Activated CD4-positive, alpha-beta T cell treated with anti-CD3 and anti-CD28 coated beads, Interleukin-2, amount 10 ng/mL, durations not matched to agents 24 days and 14 days (primary cell): ENCODE measurements at regions of chr3 and their contacts with region 1.

Region 1: GRCh38 chr3:16247276-16248061 is 17.3 kb downstream of the DPH3 start:
- DNase-seq: peak; percentile 94
- H3K4me3 Mint-ChIP-seq: no peak overlapping the region
- H3K27ac Mint-ChIP-seq: no peak overlapping the region
- H3K4me1 Mint-ChIP-seq: peaks cover 28% of the 10 kb centered on the region
- H3K27me3 Mint-ChIP-seq: no peaks in the 10 kb centered on the region

Region 2: GRCh38 chr3:15108082-15108545 is 1139.4 kb before region 1 on chr3:
- intact Hi-C with region 1: loop called (anchors 5 kb)
- DNase-seq: peak; percentile 92
- H3K4me3 Mint-ChIP-seq: no peak overlapping the region
- H3K27ac Mint-ChIP-seq: no peak overlapping the region
- H3K4me1 Mint-ChIP-seq: peaks cover 8% of the 10 kb centered on the region
- H3K27me3 Mint-ChIP-seq: peaks cover 16% of the 10 kb centered on the region

Region 3: DNA sequence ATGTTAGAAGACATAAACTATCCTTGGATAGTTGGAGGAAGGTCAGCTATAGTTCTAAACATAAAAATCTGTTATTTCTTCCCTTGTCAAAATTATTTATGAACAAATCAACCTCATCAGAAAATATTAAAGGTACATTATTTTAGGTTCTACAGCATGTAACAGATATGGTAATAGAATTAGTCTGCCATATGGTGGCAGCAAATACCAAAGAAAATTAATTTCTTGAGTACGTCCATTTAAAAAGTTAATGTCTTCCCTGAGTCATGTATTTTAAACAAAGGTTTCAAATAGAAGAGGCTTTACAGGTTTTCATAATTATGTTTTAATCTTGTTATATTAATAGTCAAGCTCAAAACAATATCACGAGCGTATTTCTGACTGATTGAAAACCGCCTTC is 431.8 kb before region 1 on chr3:
- intact Hi-C with region 1: loop called (anchors 2 kb)
- DNase-seq: no peak
- H3K4me3 Mint-ChIP-seq: no peak overlapping the region
- H3K27ac Mint-ChIP-seq: no peak overlapping the region
- H3K4me1 Mint-ChIP-seq: peaks cover 23% of the 10 kb centered on the region
- H3K27me3 Mint-ChIP-seq: no peaks in the 10 kb centered on the region

Region 4: GRCh38 chr3:15936312-15936711 is 311.2 kb before region 1 on chr3:
- intact Hi-C with region 1: no loop called
- DNase-seq: no peak
- H3K4me3 Mint-ChIP-seq: no peak overlapping the region
- H3K27ac Mint-ChIP-seq: no peak overlapping the region
- H3K4me1 Mint-ChIP-seq: no peaks in the 10 kb centered on the region
- H3K27me3 Mint-ChIP-seq: no peaks in the 10 kb centered on the region

Region 5: DNA sequence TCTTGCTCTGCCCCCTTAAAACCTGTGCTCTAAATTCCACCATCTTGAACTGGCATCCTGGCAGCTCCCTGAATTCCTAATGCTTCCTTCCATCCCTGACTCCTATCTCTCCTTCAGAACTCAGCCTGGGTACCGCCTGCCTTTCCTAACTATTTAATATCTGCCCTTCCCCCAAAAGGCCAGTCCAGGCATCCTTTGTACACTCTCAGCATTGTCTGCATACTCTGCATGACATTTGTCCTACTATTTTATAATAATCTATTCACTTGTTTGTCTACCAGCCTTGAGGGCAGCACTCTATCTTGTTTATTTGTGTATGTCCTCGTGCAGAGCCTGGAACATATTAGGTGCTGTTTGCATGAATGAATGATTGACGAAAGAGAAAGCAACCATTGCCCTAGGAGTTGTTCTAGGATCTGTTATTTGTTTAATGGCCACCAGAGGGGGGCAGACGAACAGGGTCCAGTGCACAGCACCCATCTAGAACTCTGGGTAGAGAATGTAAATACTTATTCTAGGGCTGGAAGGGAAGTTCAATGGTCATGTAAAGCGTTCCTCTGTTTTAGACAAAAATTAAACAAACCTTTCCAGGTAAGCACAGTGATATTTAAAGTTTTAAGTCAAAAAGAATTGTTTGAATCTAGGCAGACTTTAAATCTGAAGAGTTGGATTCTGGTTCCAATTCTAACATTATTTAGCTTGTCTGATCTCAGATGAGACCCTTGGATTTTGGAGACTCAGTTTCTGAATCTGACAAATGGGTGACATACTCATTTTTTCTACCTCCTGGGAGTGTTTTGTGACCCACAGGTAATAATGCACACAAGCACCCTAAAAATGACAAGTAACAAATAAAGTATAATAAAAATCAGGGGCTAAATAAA is 198.8 kb before region 1 on chr3:
- intact Hi-C with region 1: loop called (anchors 1 kb)
- DNase-seq: peak; percentile 83
- H3K4me3 Mint-ChIP-seq: peak overlapping the region; percentile 17
- H3K27ac Mint-ChIP-seq: no peak overlapping the region
- H3K4me1 Mint-ChIP-seq: peaks cover 4% of the 10 kb centered on the region
- H3K27me3 Mint-ChIP-seq: peaks cover 4% of the 10 kb centered on the region

Region 6: GRCh38 chr3:16177962-16178627 is 69.4 kb before region 1 on chr3:
- intact Hi-C with region 1: loop called (anchors 1 kb)
- DNase-seq: peak; percentile 90
- H3K4me3 Mint-ChIP-seq: no peak overlapping the region
- H3K27ac Mint-ChIP-seq: no peak overlapping the region
- H3K4me1 Mint-ChIP-seq: peaks cover 3% of the 10 kb centered on the region
- H3K27me3 Mint-ChIP-seq: peaks cover 26% of the 10 kb centered on the region